ENCODE measurements at regions of chr2 and their contacts with region 1.

Region 1: DNA sequence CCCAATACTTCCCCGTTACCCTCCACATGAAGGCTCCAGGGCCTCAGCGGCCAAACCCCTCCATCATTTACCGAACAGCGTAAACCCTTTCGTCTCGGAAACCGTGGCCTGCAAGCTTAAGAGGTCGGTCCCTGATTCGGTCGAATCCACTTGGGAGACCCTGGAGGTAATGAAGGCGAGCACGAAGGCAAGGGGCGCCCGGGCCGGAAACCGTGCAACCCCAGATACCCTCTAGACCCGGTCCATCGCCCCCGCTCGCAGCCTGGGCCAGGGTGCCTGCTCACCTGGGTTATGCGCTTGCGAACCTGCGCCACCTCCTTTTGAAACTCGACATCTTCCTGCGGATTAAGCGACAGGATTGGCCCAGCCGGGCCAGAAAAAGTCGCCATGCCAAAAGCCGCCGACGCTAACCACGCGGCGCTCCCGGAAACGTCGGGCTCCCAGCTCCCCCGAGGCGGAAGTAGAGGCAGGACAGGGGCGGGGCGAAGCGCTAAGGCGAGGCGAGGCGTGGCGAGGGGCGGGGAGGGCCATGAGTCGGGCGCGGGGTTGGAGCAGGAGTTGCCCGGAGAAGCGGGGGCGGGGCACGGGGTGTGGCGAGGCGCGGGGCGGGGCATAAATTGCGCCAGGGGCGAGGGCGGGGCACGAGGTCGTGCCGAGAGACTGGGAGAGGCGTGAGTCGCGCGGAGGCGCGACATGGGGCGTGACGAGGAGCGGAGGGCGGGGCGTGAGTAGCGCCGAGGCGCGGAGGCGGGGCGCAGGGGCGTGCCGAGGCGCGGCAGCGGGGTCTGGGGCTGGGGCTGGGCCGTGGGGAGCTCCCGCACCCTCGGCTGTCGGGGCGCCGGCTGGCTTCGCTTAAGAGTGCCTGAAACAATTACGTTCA is at the start of gene NIFK:
- DNase-seq: peak; percentile 99
- H3K4me3 ChIP-seq: peak within 1 kb of the TSS; percentile 91 to 95
- H3K27ac ChIP-seq: peak within 1 kb of the TSS; percentile 71
- H3K4me1 ChIP-seq: peaks cover 24% of the 10 kb centered on the region
- H3K27me3 ChIP-seq: no peaks in the 10 kb centered on the region
- CTCF ChIP-seq: no peak
- POLR2A ChIP-seq: peak in 1 of 2 donors; percentile 19
- total RNA-seq, gene NIFK: 33.1 TPM

Region 2: GRCh38 chr2:121319953-121320352 is 416.7 kb before region 1 on chr2:
- intact Hi-C with region 1: no loop called
- DNase-seq: peak in 1 of 2 donors; percentile 54
- H3K4me3 ChIP-seq: no peak overlapping the region
- H3K27ac ChIP-seq: no peak overlapping the region
- H3K4me1 ChIP-seq: no peaks in the 10 kb centered on the region
- H3K27me3 ChIP-seq: no peaks in the 10 kb centered on the region
- CTCF ChIP-seq: no peak
- POLR2A ChIP-seq: no peak

Region 3: DNA sequence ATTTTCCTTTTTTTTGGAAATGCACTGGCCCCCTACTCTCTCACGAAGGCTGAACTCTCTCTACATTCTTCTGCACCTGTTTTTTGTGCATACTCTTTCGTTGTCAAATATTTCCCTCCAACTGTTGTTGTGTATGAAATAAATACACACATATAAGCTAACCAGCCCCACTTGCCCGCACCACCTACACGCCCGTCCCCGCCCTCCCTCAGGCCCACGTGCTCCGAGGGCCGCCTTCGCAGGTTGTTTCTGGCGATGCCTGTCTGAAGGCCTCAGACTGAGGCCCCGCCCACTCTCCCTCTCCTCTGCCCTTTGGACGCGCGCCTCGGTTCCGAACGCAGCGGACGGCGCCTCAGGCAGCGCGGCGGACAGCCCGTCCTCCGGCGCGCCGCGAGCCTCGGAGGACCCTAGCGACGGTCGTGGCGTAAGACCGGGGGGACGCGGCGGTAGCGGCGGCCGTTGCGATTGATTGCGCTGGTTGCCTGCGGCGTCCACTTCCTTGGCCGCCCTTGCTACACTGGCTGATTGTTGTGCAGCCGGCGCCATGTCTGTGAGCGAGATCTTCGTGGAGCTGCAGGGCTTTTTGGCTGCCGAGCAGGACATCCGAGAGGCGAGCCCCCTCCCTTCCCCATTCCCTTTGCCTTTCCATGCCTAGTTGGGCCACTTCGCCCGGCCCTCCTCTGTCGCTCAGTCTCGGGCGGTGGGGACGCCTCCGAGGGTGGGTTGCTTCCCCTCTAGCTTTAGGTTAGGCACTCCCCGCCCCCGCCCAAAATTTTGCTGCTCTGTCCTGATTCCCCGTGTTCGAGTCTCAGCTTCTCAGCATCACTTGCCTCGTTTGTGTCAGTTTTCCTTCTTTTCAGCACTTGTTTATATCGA is 18.8 kb after region 1 on chr2 and contains the start of gene TSN:
- intact Hi-C with region 1: loop called (anchors 2 kb)
- DNase-seq: peak in 1 of 2 donors; percentile 95
- H3K4me3 ChIP-seq: peak within 1 kb of the TSS; percentile 85 to 93
- H3K27ac ChIP-seq: peak within 1 kb of the TSS; percentile 44
- H3K4me1 ChIP-seq: peaks cover 29% of the 10 kb centered on the region
- H3K27me3 ChIP-seq: no peaks in the 10 kb centered on the region
- CTCF ChIP-seq: no peak
- POLR2A ChIP-seq: no peak
- total RNA-seq, gene TSN: 35.4 TPM

Region 4: DNA sequence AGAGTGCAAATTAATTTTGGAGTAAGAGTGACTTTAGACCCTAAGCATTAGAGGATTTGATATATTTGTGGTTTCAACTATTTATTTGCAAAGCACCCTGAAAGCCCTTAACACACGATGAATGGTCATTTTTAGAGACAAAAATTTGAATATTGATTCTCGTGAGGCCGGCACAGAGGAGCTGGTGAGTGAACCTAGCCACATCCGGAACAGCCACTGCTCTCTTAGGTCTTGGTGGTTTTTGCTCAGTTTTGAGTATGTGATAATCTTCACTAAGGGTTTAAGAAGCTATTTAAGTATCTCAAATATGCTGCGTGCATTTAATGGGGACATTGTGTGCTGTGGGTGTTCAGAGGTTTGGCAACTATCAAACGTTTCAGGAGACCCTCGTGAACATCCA is 223.5 kb after region 1 on chr2:
- intact Hi-C with region 1: no loop called
- DNase-seq: no peak
- H3K4me3 ChIP-seq: no peak overlapping the region
- H3K27ac ChIP-seq: no peak overlapping the region
- H3K4me1 ChIP-seq: no peaks in the 10 kb centered on the region
- H3K27me3 ChIP-seq: no peaks in the 10 kb centered on the region
- CTCF ChIP-seq: no peak
- POLR2A ChIP-seq: no peak

Region 5: DNA sequence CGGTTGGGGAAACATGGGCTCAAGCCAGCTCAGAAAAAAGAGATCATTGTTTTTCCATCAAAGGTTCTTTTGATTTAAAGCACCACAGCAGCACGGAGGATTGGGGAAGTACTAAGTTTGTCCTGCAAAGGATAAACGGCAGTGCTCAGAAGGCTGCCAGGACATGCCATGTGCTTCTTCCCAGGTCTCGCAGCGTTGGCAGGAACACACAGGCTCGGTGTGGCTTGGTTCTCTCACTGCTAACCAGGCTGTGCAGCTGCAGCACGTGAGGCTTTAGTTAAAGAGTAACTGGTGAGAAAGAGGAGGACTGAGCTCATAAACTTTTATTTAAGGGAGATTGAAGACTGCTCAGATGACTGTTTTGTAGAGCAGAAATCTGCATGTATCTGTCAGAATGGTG is 283.0 kb after region 1 on chr2:
- intact Hi-C with region 1: no loop called
- DNase-seq: no peak
- H3K4me3 ChIP-seq: no peak overlapping the region
- H3K27ac ChIP-seq: no peak overlapping the region
- H3K4me1 ChIP-seq: no peaks in the 10 kb centered on the region
- H3K27me3 ChIP-seq: no peaks in the 10 kb centered on the region
- CTCF ChIP-seq: no peak
- POLR2A ChIP-seq: no peak